Naive thymus-derived CD4-positive, alpha-beta T cell (primary cell): ENCODE measurements at regions of chr6 and their contacts with region 1.

Region 1: GRCh38 chr6:31776989-31777666 is at the start of gene VWA7:
- DNase-seq: peak in 5 of 9 donors; percentile 23 to 84 (median 32)
- ATAC-seq: peak; percentile 80
- H3K4me3 ChIP-seq: peak within 1 kb of the TSS; percentile 24
- H3K4me3 Mint-ChIP-seq: peak within 1 kb of the TSS in 3 of 10 donors; percentile 57 to 65 (median 63)
- H3K27ac ChIP-seq: no peak within 1 kb of the TSS
- H3K27ac Mint-ChIP-seq: peak within 1 kb of the TSS in 1 of 9 donors; percentile 83
- H3K4me1 ChIP-seq: peaks cover 27% of the 10 kb centered on the region in 2 donors
- H3K4me1 Mint-ChIP-seq: peaks cover 5 to 36% (median 33%) of the 10 kb centered on the region in 7 donors
- H3K27me3 ChIP-seq: no peaks in the 10 kb centered on the region
- H3K27me3 Mint-ChIP-seq: no peaks in the 10 kb centered on the region
- total RNA-seq, gene VWA7: 0.53 to 4.5 (median 1.1) TPM

Region 2: GRCh38 chr6:31403283-31403989 is 373.7 kb before region 1 on chr6 and contains the start of gene MICA:
- CTCF ChIA-PET with region 1: no interaction called
- POLR2A ChIA-PET with region 1: no interaction called
- intact Hi-C with region 1: no loop called
- DNase-seq: peak in 8 of 9 donors; percentile 32 to 79 (median 41)
- ATAC-seq: peak; percentile 71
- H3K4me3 ChIP-seq: peak within 1 kb of the TSS; percentile 79
- H3K4me3 Mint-ChIP-seq: peak within 1 kb of the TSS; percentile 83 to 98 (median 90)
- H3K27ac ChIP-seq: peak within 1 kb of the TSS; percentile 76
- H3K27ac Mint-ChIP-seq: peak within 1 kb of the TSS; percentile 25 to 94 (median 78)
- H3K4me1 ChIP-seq: peaks cover 17 to 19% of the 10 kb centered on the region in 2 donors
- H3K4me1 Mint-ChIP-seq: peaks cover 64 to 90% (median 70%) of the 10 kb centered on the region in 7 donors
- H3K27me3 ChIP-seq: no peaks in the 10 kb centered on the region
- H3K27me3 Mint-ChIP-seq: peaks cover 0 to 2% (median 0%) of the 10 kb centered on the region in 5 donors
- total RNA-seq, gene MICA: 12.1 to 17.4 (median 15.2) TPM

Region 3: GRCh38 chr6:31815025-31815838 is 38.1 kb after region 1 on chr6 and contains the starts of genes HSPA1A and HSPA1L:
- CTCF ChIA-PET with region 1: no interaction called
- POLR2A ChIA-PET with region 1: interaction called, 5 read pairs
- intact Hi-C with region 1: loop called in 1 of 2 experiments (anchors 2 kb)
- DNase-seq: peak in 6 of 9 donors; percentile 32 to 81 (median 42)
- ATAC-seq: peak; percentile 43
- H3K4me3 ChIP-seq: peak within 1 kb of the TSS; percentile 68
- H3K4me3 Mint-ChIP-seq: peak within 1 kb of the TSS; percentile 85 to 96 (median 94)
- H3K27ac ChIP-seq: peak within 1 kb of the TSS; percentile 78
- H3K27ac Mint-ChIP-seq: peak within 1 kb of the TSS; percentile 86 to 93 (median 90)
- H3K4me1 ChIP-seq: peaks cover 21 to 30% of the 10 kb centered on the region in 2 donors
- H3K4me1 Mint-ChIP-seq: peaks cover 7 to 44% (median 39%) of the 10 kb centered on the region in 7 donors
- H3K27me3 ChIP-seq: no peaks in the 10 kb centered on the region
- H3K27me3 Mint-ChIP-seq: no peaks in the 10 kb centered on the region
- total RNA-seq, gene HSPA1A: 6.7 to 125 (median 30.3) TPM
- total RNA-seq, gene HSPA1L: 3.3 to 5.5 (median 4.7) TPM

Region 4: DNA sequence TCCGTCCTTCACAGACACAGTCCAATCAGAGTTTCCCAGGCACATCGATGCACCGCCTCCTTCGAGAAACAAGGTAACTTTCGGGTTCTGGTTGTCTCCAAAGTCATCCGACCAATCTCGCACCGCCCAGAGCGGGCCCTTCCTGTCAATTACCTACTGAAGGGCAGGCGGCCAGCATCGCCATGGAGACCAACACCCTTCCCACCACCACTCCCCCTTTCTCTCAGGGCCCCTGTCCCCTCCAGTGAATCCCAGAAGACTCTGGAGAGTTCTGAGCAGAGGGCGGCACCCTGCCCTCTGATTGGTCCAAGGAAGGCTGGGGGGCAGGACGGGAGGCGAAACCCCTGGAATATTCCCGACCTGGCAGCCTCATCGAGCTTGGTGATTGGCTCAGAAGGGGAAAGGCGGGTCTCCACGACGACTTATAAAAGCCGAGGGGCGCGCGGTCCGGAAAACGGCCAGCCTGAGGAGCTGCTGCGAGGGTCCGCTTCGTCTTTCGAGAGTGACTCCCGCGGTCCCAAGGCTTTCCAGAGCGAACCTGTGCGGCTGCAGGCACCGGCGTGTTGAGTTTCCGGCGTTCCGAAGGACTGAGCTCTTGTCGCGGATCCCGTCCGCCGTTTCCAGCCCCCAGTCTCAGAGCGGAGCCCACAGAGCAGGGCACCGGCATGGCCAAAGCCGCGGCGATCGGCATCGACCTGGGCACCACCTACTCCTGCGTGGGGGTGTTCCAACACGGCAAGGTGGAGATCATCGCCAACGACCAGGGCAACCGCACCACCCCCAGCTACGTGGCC is 50.4 kb after region 1 on chr6 and contains the start of gene HSPA1B:
- CTCF ChIA-PET with region 1: no interaction called
- POLR2A ChIA-PET with region 1: no interaction called
- intact Hi-C with region 1: no loop called
- DNase-seq: peak; percentile 55 to 96 (median 82)
- ATAC-seq: peak; percentile 80
- H3K4me3 ChIP-seq: peak within 1 kb of the TSS; percentile 74
- H3K4me3 Mint-ChIP-seq: peak within 1 kb of the TSS; percentile 85 to 97 (median 90)
- H3K27ac ChIP-seq: peak within 1 kb of the TSS; percentile 72
- H3K27ac Mint-ChIP-seq: peak within 1 kb of the TSS; percentile 93 to 99 (median 97)
- H3K4me1 ChIP-seq: peaks cover 12 to 17% of the 10 kb centered on the region in 2 donors
- H3K4me1 Mint-ChIP-seq: peaks cover 11 to 51% (median 46%) of the 10 kb centered on the region in 7 donors
- H3K27me3 ChIP-seq: no peaks in the 10 kb centered on the region
- H3K27me3 Mint-ChIP-seq: no peaks in the 10 kb centered on the region
- total RNA-seq, gene HSPA1B: 8.6 to 68.9 (median 28.9) TPM